ENCODE measurements at regions of chr1 and their contacts with region 1.

Region 1: GRCh38 chr1:53278201-53278725 is 39.9 kb upstream of the MAGOH start:
- DNase-seq: peak in 1 of 2 experiments; percentile 89
- H3K4me3 ChIP-seq: no peak overlapping the region
- H3K27ac ChIP-seq: no peak overlapping the region
- H3K4me1 ChIP-seq: no peaks in the 10 kb centered on the region
- H3K27me3 ChIP-seq: no peaks in the 10 kb centered on the region
- CTCF ChIP-seq: peak; percentile 68 to 72 (median 69)
- EP300 ChIP-seq: no peak
- POLR2A ChIP-seq: no peak
- RAD21 ChIP-seq: peak; percentile 85 to 87

Region 2: GRCh38 chr1:53259932-53260331 is 18.3 kb before region 1 on chr1:
- CTCF ChIA-PET with region 1: interaction called, 36 read pairs
- POLR2A ChIA-PET with region 1: no interaction called
- DNase-seq: no peak
- H3K4me3 ChIP-seq: no peak overlapping the region
- H3K27ac ChIP-seq: no peak overlapping the region
- H3K4me1 ChIP-seq: no peaks in the 10 kb centered on the region
- H3K27me3 ChIP-seq: no peaks in the 10 kb centered on the region
- CTCF ChIP-seq: no peak
- EP300 ChIP-seq: no peak
- POLR2A ChIP-seq: no peak
- RAD21 ChIP-seq: no peak

Region 3: DNA sequence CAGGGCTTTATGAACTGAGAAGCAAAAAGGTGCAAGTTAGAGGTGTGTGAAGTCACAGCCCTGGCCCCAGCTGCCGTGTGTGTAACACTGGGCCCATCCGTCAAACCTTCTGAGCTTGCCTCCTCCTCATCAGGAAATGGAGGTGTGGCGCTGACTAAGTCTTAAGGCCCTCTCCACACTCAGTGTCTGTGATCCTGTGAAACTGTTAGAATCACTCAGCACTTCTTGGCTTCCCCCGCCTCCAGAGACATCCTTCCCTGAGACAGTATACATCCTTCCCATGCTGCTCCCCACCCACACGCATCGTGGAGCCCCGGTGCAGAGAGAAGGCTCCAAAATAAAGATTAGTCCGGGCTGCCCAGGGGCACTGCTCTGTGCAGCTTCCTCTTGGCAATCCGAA is 16.3 kb after region 1 on chr1:
- CTCF ChIA-PET with region 1: interaction called, 103 read pairs
- POLR2A ChIA-PET with region 1: interaction called, 3 read pairs
- DNase-seq: no peak
- H3K4me3 ChIP-seq: no peak overlapping the region
- H3K27ac ChIP-seq: no peak overlapping the region
- H3K4me1 ChIP-seq: peaks cover 0 to 5% (median under 1%) of the 10 kb centered on the region in 4 experiments; a peak in 1 of 7 replicates
- H3K27me3 ChIP-seq: no peaks in the 10 kb centered on the region
- CTCF ChIP-seq: no peak
- EP300 ChIP-seq: no peak
- POLR2A ChIP-seq: no peak
- RAD21 ChIP-seq: no peak

Region 4: GRCh38 chr1:53326088-53326597 is 47.9 kb after region 1 on chr1:
- CTCF ChIA-PET with region 1: interaction called, 18 read pairs
- POLR2A ChIA-PET with region 1: interaction called, 7 read pairs
- DNase-seq: peak; percentile 83 to 93
- H3K4me3 ChIP-seq: peak overlapping the region; percentile 74 to 85 (median 80)
- H3K27ac ChIP-seq: peak overlapping the region; percentile 78; the same call in 1 of the 2 replicates
- H3K4me1 ChIP-seq: peaks cover 4 to 15% (median 9%) of the 10 kb centered on the region in 4 experiments
- H3K27me3 ChIP-seq: no peaks in the 10 kb centered on the region
- CTCF ChIP-seq: no peak
- EP300 ChIP-seq: no peak
- POLR2A ChIP-seq: peak in 1 of 2 experiments; percentile 76; a peak in 2 of 3 replicates
- RAD21 ChIP-seq: no peak

Region 5: DNA sequence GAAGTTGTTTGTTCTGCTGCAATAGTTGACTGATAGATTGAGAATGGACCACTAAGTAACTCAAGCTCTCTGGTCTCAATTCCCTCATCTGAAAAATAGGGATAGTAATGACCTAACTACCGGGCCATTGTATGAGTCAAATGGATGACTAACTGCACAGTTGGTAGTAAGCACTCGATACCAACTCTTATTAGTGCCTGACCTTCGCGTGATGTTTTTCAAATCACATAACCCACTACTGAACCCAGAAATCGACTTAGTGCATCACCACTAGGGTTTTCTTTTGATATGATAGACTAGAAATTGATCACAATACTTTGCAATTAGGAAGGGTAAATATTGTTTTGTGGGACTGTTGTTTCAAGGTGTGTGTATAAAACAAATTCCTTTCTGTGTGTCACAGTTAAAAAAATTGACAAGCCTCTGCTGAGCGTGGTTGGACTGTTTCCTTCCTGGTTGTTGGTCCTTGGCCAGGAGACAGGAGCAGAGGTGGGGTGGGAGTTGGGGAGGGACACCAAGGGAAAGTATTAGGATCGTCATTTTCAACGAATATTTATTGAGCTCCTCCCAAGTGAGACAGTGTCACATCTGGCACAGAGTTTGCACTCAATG is 103.6 kb after region 1 on chr1:
- CTCF ChIA-PET with region 1: interaction called, 12 read pairs
- POLR2A ChIA-PET with region 1: no interaction called
- DNase-seq: no peak
- H3K4me3 ChIP-seq: no peak overlapping the region
- H3K27ac ChIP-seq: no peak overlapping the region
- H3K4me1 ChIP-seq: no peaks in the 10 kb centered on the region
- H3K27me3 ChIP-seq: peaks cover 0 to 6% (median 1%) of the 10 kb centered on the region in 4 experiments; a peak in 4 of 7 replicates
- CTCF ChIP-seq: no peak
- EP300 ChIP-seq: no peak
- POLR2A ChIP-seq: no peak
- RAD21 ChIP-seq: no peak